Aorta (tissue), 5 donors: ENCODE measurements at regions of chr11 and their contacts with region 1.

Region 1: DNA sequence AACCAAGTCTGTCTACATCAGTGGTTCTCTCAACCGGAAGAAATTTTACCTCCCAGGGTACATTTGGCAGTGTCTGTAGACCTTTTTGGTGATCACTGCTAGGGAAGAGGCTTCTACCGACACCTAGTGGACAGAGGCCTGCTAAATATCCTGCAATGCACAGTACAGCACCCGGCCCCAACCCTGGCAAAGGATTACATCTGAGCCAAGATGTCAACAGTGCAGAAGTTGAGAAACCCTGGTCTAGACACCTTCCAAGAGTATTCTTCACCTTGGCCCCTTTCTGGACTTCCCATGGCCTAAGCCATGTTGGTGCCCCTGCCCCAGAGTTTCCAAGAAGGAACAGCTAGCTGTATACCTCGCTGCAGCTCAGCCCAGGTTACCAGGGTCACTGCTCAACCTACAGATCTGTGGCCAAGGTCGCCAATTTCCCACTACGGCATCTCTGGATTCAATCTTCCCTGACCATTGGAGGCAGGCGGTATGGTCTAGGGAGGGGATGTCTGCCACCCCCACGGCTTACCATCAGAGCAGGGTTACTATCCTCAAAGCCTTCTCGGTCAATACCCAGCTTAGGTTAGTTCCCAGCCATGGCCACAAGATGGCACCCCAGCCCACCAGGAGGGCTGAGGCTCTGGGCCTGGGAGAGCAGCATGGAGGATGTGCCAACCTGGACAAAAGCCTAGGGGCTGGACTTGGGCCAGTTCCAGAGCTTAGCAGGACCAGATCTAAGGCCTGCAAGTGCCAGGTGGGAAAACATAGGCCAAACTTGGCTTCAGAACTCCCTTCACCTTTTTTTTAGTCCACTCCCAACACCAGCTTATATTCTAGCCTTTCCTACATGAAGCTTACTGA is 3.7 kb upstream of the KCNC1 start:
- DNase-seq: peak; percentile 78 to 90
- ATAC-seq: peak; percentile 83
- H3K4me3 ChIP-seq: no peak overlapping the region
- H3K27ac ChIP-seq: no peak overlapping the region
- H3K4me1 ChIP-seq: no peaks in the 10 kb centered on the region
- H3K27me3 ChIP-seq: no peaks in the 10 kb centered on the region

Region 2: DNA sequence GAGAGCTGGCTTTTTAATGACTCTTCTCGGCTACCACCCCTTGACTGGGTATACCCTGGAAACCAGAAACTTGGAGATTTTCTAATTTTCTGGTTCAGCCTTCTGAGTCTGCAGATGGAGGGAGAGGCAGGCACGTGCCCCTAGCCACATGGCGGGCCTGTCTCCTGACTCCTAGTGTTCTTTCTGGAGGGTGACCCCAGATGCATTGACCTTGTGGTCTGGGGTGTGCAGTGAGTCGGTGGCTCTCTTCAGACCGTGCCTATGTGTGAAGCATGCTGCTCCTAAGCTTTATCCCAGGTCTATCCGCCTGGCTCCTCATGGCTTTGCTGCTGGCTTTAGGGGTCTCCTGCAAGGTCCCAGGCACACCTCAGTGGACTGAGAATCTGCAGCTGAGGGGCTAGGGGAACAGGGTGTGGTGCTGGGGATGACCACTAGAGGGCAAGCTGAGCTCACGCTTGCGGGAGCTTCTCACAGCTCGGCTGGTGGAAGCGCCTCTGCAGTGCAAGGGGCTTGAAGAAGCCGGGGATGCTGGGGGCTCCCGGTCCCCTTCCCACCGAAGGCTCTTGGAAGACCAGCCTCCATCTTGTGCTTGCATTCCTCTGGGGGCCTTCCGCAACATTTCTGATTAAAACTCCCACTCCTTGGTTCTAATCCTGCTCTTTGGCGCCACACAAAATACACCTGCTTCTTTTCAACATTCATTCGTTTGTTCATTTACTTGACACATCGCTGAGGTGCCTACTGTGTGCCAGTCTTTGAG is 132.0 kb before region 1 on chr11:
- intact Hi-C with region 1: loop called in 1 of 2 experiments (anchors 5 kb)
- DNase-seq: peak; percentile 77 to 92
- ATAC-seq: peak; percentile 77
- H3K4me3 ChIP-seq: no peak overlapping the region
- H3K27ac ChIP-seq: no peak overlapping the region
- H3K4me1 ChIP-seq: no peaks in the 10 kb centered on the region
- H3K27me3 ChIP-seq: no peaks in the 10 kb centered on the region

Region 3: DNA sequence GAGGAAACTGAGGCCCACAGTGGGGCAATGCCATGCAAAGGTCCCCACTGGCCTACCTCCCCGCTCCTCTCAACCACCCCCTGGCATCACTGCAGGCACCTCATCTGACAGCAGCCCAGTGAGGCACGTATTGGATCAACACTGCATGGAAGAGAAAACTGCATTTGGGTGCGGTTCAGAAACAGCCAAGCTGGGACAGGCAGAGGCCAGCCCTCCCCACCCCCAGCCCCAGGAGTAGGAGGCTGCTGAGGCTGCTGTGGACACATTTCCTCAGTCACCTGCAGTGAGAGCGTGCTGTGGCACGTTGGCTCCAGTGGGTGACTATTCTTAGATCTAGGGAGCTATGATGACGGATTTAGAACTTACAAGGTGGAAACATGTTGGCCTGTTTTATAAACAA is 67.4 kb after region 1 on chr11:
- intact Hi-C with region 1: no loop called
- DNase-seq: no peak
- ATAC-seq: no peak
- H3K4me3 ChIP-seq: no peak overlapping the region
- H3K27ac ChIP-seq: no peak overlapping the region
- H3K4me1 ChIP-seq: no peaks in the 10 kb centered on the region
- H3K27me3 ChIP-seq: no peaks in the 10 kb centered on the region

Region 4: GRCh38 chr11:17827006-17827405 is 96.2 kb after region 1 on chr11:
- intact Hi-C with region 1: loop called in 1 of 2 experiments (anchors 5 kb)
- DNase-seq: no peak
- ATAC-seq: no peak
- H3K4me3 ChIP-seq: no peak overlapping the region
- H3K27ac ChIP-seq: no peak overlapping the region
- H3K4me1 ChIP-seq: peaks cover 3 to 4% of the 10 kb centered on the region in 2 donors
- H3K27me3 ChIP-seq: no peaks in the 10 kb centered on the region

Region 5: GRCh38 chr11:17978553-17979287 is 247.9 kb after region 1 on chr11:
- intact Hi-C with region 1: loop called (anchors 1 to 2 kb)
- DNase-seq: no peak
- ATAC-seq: peak; percentile 49
- H3K4me3 ChIP-seq: no peak overlapping the region
- H3K27ac ChIP-seq: no peak overlapping the region
- H3K4me1 ChIP-seq: no peaks in the 10 kb centered on the region
- H3K27me3 ChIP-seq: no peaks in the 10 kb centered on the region

Region 6: DNA sequence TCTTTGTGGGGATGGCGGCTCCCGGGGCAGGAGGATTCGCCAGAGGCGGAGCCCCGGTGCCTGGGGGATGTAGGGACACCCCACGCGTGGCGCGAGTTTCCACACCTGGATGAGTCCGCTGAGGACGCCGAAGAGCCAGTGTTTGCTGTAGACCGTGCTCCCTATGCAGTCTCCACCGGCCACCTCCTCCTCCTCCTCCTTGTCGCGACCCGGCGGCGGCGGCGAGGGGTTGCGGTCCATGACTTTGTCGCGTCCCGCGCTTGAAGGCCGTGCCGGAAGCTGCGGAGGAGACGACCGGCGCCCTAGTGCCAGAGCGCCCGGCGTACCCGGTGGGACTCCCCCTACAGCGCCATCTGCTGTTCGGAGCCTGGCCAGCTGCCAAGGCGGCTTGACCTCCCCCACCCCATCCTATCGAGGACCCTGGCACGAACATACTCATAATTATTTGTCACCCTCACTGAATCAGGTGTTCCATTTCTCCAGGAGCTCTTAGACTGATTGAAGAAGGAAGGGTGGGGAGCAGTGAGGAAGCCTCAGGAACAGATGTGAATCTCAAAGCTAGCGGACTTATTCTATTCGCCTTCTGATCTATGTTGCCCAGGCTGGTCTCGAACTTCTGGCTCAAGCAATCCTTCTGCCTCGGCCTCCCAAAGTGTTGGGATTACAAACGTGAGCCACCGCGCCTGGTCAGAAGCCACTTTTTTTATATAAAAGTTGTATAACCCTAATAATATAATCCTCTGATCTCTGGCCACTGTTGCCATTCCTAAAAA is 375.2 kb after region 1 on chr11 and contains the start of gene SAAL1:
- intact Hi-C with region 1: loop called in 1 of 2 experiments (anchors 5 kb)
- DNase-seq: peak; percentile 89 to 96
- ATAC-seq: peak; percentile 96
- H3K4me3 ChIP-seq: peak within 1 kb of the TSS; percentile 84 to 91
- H3K27ac ChIP-seq: no peak within 1 kb of the TSS
- H3K4me1 ChIP-seq: peaks cover 1 to 6% of the 10 kb centered on the region in 2 donors
- H3K27me3 ChIP-seq: no peaks in the 10 kb centered on the region
- total RNA-seq, gene SAAL1: 9.3 to 15.8 TPM